ENCODE measurements at regions of chrX and their contacts with region 1.

Region 1: GRCh38 chrX:5876984-5877596 is 351.6 kb downstream of the NLGN4X start:
- DNase-seq: peak; percentile 30
- H3K4me3 ChIP-seq: no peak overlapping the region
- H3K27ac ChIP-seq: no peak overlapping the region
- H3K4me1 ChIP-seq: no peaks in the 10 kb centered on the region
- H3K27me3 ChIP-seq: no peaks in the 10 kb centered on the region
- CTCF ChIP-seq: peak; percentile 61 to 77

Region 2: DNA sequence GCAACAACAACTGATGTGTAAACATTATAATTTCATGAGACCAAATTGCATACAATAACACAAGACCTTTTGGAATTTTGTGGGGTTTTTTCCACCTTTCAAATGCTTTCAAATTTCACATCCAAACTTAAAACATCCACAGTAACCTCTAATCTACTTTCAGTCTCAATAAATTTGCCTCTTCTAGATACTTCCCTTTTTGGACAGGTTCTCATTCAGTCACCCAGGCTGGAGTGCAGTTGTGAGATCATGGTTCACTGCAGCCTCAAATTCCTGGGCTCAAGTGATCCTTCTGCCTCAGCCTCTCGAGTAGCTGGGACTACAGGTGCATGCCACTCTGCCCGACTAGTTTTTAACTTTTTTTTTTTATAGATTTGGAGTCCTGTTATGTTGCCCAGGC is 205.0 kb before region 1 on chrX:
- CTCF ChIA-PET with region 1: no interaction called
- dilution Hi-C with region 1: no loop called
- in situ Hi-C with region 1: loop called in 1 of 2 experiments (anchors 10 kb)
- intact Hi-C with region 1: no loop called
- DNase-seq: no peak
- H3K4me3 ChIP-seq: no peak overlapping the region
- H3K27ac ChIP-seq: no peak overlapping the region
- H3K4me1 ChIP-seq: no peaks in the 10 kb centered on the region
- H3K27me3 ChIP-seq: no peaks in the 10 kb centered on the region
- CTCF ChIP-seq: no peak

Region 3: GRCh38 chrX:5681159-5681558 is 195.9 kb before region 1 on chrX:
- CTCF ChIA-PET with region 1: no interaction called
- dilution Hi-C with region 1: no loop called
- in situ Hi-C with region 1: loop called in 1 of 2 experiments (anchors 10 kb)
- intact Hi-C with region 1: loop called (anchors 1 kb)
- DNase-seq: peak; percentile 32
- H3K4me3 ChIP-seq: no peak overlapping the region
- H3K27ac ChIP-seq: no peak overlapping the region
- H3K4me1 ChIP-seq: no peaks in the 10 kb centered on the region
- H3K27me3 ChIP-seq: no peaks in the 10 kb centered on the region
- CTCF ChIP-seq: peak; percentile 32 to 54

Measured in mammary epithelial cell (primary cell).